ENCODE measurements at regions of chr1 and their contacts with region 1.

Region 1: GRCh38 chr1:1374929-1375662 is at the start of gene AURKAIP1:
- DNase-seq: peak; percentile 95 to 99 (median 99)
- H3K4me3 ChIP-seq: peak within 1 kb of the TSS; percentile 73 to 100 (median 98)
- H3K27ac ChIP-seq: peak within 1 kb of the TSS; percentile 59 to 98 (median 94)
- H3K27me3 ChIP-seq: no peaks in the 10 kb centered on the region
- CTCF ChIP-seq: peak in 55 of 56 donors; percentile 16 to 72 (median 51)
- total RNA-seq, gene AURKAIP1: 78.7 to 143 (median 109) TPM

Region 2: GRCh38 chr1:1033009-1033587 is 342.0 kb before region 1 on chr1:
- intact Hi-C with region 1: loop called in 1 of 2 experiments (anchors 5 kb)
- DNase-seq: peak; percentile 52 to 94 (median 88)
- H3K4me3 ChIP-seq: peak overlapping the region; percentile 21 to 73 (median 57)
- H3K27ac ChIP-seq: peak overlapping the region in 52 of 59 donors; percentile 21 to 89 (median 79)
- H3K27me3 ChIP-seq: no peaks in the 10 kb centered on the region
- CTCF ChIP-seq: peak; percentile 47 to 91 (median 83)

Region 3: DNA sequence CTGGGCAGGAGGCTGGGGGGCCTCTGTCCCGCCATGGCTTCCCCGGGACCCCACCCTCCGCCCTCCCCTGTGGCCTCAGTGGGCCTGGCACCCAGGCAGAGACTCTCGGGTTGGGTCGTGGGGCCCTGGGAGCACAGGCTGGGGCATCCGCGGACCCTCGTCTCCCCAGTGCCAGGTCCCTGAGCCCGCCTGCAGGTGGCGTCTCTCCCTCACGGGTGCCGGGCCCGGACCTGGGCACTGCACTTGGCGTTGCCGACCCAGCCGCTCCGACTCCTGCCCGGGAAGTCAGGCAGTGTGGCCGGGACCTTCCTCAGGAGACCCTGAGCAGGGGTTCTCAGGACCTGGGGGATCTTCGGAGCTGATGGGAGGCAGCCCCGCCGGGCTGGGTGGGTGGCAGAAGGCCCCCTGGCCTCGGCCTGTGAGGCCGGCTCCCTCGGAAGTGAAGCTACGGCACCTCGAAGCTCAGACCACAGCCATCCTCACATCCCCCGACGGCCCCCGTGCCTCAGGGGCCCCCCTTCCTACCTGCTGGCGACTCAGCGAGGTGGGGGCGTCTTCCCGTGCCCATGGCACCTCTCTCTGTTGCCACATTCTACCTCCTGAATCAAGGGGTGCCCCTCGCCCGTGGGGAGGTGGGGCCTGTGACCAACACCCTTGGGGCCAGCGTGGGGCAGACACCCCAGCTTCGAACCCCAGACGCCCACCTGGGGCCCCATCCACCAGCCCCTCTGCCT is 252.9 kb before region 1 on chr1:
- intact Hi-C with region 1: loop called (anchors 5 kb)
- DNase-seq: peak; percentile 69 to 89 (median 78)
- H3K4me3 ChIP-seq: peak overlapping the region in 52 of 59 donors; percentile 1 to 59 (median 32)
- H3K27ac ChIP-seq: peak overlapping the region in 19 of 59 donors; percentile 6 to 67 (median 51)
- H3K27me3 ChIP-seq: no peaks in the 10 kb centered on the region
- CTCF ChIP-seq: peak; percentile 39 to 98 (median 91)

Region 4: GRCh38 chr1:1399187-1399871 is 24.2 kb after region 1 on chr1 and contains the start of gene CCNL2:
- intact Hi-C with region 1: loop called in 1 of 2 experiments (anchors 2 kb)
- DNase-seq: peak; percentile 96 to 99 (median 98)
- H3K4me3 ChIP-seq: peak within 1 kb of the TSS; percentile 78 to 100 (median 99)
- H3K27ac ChIP-seq: peak within 1 kb of the TSS; percentile 58 to 96 (median 90)
- H3K27me3 ChIP-seq: no peaks in the 10 kb centered on the region
- CTCF ChIP-seq: peak; percentile 23 to 80 (median 64)
- total RNA-seq, gene CCNL2: 111 to 235 (median 165) TPM

Region 5: GRCh38 chr1:1615256-1616044 is 240.4 kb after region 1 on chr1 and contains the start of gene MIB2:
- intact Hi-C with region 1: loop called in 1 of 2 experiments (anchors 10 kb)
- DNase-seq: peak; percentile 94 to 99 (median 96)
- H3K4me3 ChIP-seq: peak within 1 kb of the TSS; percentile 69 to 100 (median 99)
- H3K27ac ChIP-seq: peak within 1 kb of the TSS; percentile 95 to 100 (median 100)
- H3K27me3 ChIP-seq: no peaks in the 10 kb centered on the region
- CTCF ChIP-seq: peak in 13 of 56 donors; percentile 9 to 36 (median 22)
- total RNA-seq, gene MIB2: 86.0 to 202 (median 127) TPM

Region 6: DNA sequence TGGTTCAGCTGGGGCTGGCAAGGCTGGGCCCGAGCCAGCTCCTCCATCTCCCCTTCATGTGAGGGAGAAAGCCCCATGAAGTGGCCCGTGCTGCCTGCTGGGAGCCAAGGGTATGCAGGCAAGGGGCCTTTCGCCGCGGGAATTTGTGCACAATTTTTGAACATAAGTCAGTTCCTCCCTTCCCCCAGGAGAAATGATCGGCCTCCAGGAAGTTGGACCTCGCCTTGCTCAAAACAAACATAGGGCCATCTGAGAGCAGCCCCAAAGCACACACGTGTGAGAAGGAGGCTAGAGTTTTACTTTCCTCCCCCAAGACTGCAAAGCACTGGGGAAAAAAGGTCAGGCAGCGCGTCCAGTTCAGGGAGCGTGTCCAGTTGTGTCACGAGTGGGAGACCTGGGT is 1758.6 kb after region 1 on chr1:
- intact Hi-C with region 1: no loop called
- DNase-seq: no peak
- H3K4me3 ChIP-seq: no peak overlapping the region
- H3K27ac ChIP-seq: peak overlapping the region in 6 of 59 donors; percentile 5 to 26 (median 14)
- H3K27me3 ChIP-seq: peaks cover 0 to 38% (median 8%) of the 10 kb centered on the region in 45 donors
- CTCF ChIP-seq: no peak

Measured in dorsolateral prefrontal cortex (tissue), 120 donors.